Natural killer cell (primary cell): ENCODE measurements at regions of chr19 and their contacts with region 1.

Region 1: GRCh38 chr19:47514869-47515588 is at the start of gene NAPA:
- DNase-seq: peak; percentile 100
- ATAC-seq: peak; percentile 90 to 97 (median 91)
- H3K4me3 ChIP-seq: peak within 1 kb of the TSS; percentile 75
- H3K4me3 Mint-ChIP-seq: peak within 1 kb of the TSS; percentile 98
- H3K27ac ChIP-seq: peak within 1 kb of the TSS; percentile 90
- H3K27ac Mint-ChIP-seq: peak within 1 kb of the TSS; percentile 98 to 100
- H3K4me1 ChIP-seq: peaks cover 75% of the 10 kb centered on the region
- H3K4me1 Mint-ChIP-seq: peaks cover 56 to 90% of the 10 kb centered on the region in 2 donors
- H3K27me3 ChIP-seq: no peaks in the 10 kb centered on the region
- H3K27me3 Mint-ChIP-seq: no peaks in the 10 kb centered on the region
- CTCF ChIP-seq: no peak
- total RNA-seq, gene NAPA: 192 to 215 (median 192) TPM

Region 2: DNA sequence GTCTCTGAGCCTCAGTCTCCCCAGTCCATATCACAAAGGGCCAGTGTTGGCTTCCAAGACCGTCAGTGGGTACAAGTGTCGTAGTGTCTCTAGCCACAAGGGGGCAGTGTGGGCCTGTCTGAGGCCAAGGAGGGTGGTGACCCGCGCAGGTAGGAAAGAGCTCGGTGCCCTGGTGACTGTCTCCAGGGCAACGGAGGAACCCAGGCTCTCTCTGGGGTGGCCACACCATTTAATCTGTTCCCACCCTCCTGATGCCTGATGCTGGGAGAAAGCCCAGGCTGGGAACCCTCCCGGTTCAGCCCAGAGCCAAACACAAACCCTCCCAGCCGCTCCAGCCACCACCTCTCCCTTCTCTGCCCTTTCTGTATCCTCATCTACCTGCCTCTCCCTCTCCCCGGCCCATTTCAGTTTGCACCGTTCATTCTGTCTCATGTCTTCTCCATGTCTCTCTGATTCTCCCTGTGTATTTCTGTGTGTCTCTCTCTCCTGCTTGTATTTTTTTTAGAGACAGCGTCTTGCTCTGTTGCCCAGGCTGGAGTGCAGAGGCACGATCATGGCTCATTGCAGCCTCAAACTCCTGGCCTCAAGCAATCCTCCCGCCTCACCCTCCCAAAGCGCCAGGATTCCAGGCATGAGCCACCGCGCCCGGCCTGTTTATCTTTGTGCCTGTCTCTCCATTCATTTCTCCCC is 78.2 kb before region 1 on chr19:
- intact Hi-C with region 1: loop called (anchors 5 kb)
- DNase-seq: peak; percentile 81 to 92
- ATAC-seq: peak; percentile 92 to 99 (median 98)
- H3K4me3 ChIP-seq: no peak overlapping the region
- H3K4me3 Mint-ChIP-seq: no peak overlapping the region
- H3K27ac ChIP-seq: no peak overlapping the region
- H3K27ac Mint-ChIP-seq: peak overlapping the region in 1 of 2 donors; percentile 15
- H3K4me1 ChIP-seq: peaks cover 4% of the 10 kb centered on the region
- H3K4me1 Mint-ChIP-seq: peaks cover 12 to 13% of the 10 kb centered on the region in 2 donors
- H3K27me3 ChIP-seq: peaks cover 3% of the 10 kb centered on the region
- H3K27me3 Mint-ChIP-seq: peaks cover 51 to 65% of the 10 kb centered on the region in 2 donors
- CTCF ChIP-seq: peak; percentile 82

Region 3: DNA sequence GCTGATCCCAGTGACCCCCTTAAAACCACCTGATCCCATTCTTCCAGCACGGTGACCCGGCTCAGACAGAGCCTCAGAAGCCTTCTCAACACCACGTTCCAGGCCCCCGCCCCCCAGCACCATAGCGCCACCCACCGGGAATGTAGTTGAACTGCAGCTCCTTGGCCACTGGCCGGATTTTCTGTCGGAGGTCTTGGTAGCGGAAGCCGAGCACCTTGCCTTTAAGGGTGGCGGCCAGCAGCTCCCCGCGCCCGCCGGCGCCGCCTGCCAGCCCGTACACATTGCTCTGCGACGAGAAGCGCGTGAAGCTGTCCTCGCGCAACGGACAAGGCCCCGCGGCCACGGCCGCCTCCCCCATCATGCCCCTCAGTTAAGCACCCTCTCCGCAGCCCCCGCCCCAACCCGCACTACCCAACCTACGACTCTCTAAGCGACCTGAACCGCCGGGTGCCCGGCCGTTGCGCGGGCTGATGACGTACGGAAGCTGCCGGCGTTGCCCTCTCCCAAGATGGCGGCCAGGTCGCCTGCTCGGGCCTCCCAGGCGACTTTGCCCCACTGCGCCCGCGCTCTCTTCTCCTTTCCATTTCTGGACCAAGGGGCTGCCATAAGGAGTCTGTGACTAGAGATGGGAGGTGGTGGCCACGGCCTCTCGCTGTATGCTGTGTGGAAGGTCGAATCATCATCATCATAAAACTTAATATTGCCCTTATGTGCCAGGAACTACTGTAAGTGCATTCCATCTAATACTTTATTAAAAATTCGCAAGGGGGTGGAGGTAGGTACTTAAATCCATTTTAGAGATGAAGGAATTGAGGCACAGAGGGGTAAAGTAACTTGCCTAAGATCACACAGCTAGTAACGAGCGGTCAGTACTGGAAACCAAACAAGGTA is 31.0 kb before region 1 on chr19 and contains the start of gene KPTN:
- intact Hi-C with region 1: loop called (anchors 1 kb)
- DNase-seq: peak; percentile 88 to 93
- ATAC-seq: peak; percentile 81 to 92 (median 86)
- H3K4me3 ChIP-seq: peak within 1 kb of the TSS; percentile 65
- H3K4me3 Mint-ChIP-seq: peak within 1 kb of the TSS; percentile 95
- H3K27ac ChIP-seq: peak within 1 kb of the TSS; percentile 75
- H3K27ac Mint-ChIP-seq: peak within 1 kb of the TSS; percentile 93 to 97
- H3K4me1 ChIP-seq: peaks cover 35% of the 10 kb centered on the region
- H3K4me1 Mint-ChIP-seq: peaks cover 23 to 36% of the 10 kb centered on the region in 2 donors
- H3K27me3 ChIP-seq: no peaks in the 10 kb centered on the region
- H3K27me3 Mint-ChIP-seq: peaks cover 0 to 3% of the 10 kb centered on the region in 2 donors
- CTCF ChIP-seq: peak; percentile 82
- total RNA-seq, gene KPTN: 3.0 to 4.2 (median 3.6) TPM

Region 4: GRCh38 chr19:47540728-47541127 is 25.7 kb after region 1 on chr19:
- intact Hi-C with region 1: loop called (anchors 1 kb)
- DNase-seq: peak in 1 of 2 donors; percentile 53
- ATAC-seq: no peak
- H3K4me3 ChIP-seq: no peak overlapping the region
- H3K4me3 Mint-ChIP-seq: peak overlapping the region; percentile 86
- H3K27ac ChIP-seq: peak overlapping the region; percentile 68
- H3K27ac Mint-ChIP-seq: peak overlapping the region; percentile 91 to 93
- H3K4me1 ChIP-seq: peaks cover 63% of the 10 kb centered on the region
- H3K4me1 Mint-ChIP-seq: peaks cover 39 to 40% of the 10 kb centered on the region in 2 donors
- H3K27me3 ChIP-seq: peaks cover 10% of the 10 kb centered on the region
- H3K27me3 Mint-ChIP-seq: peaks cover 0 to 5% of the 10 kb centered on the region in 2 donors
- CTCF ChIP-seq: no peak

Region 5: DNA sequence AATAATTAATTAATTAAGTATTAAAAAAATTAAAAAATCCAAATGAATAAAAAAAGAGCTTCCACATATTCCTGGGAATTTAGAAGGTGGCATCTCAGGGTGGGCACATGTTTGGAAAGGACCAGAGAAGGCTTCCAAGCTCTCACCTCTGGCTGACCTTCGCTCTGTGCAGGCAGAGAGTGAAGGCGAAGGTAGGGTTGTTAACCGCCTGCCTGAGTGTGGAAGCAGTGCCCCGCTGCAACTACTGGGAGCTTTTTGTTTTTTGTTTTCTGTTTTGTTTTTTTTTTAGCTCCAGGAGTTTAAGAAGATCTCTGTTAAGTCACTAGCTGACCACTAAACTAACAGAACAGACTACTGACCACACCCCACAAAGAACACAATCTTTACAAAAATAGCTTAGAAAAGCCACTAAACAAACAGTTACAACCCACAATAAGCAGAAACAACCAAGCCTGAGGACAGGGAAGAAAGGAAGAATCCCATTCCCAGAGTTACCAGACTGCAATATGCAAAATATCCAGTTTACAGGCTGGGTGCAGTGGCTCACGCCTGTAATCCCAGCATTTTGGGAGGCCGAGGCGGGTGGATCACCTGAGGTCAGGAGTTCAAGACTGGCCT is 46.5 kb after region 1 on chr19:
- intact Hi-C with region 1: no loop called
- DNase-seq: no peak
- ATAC-seq: no peak
- H3K4me3 ChIP-seq: no peak overlapping the region
- H3K4me3 Mint-ChIP-seq: no peak overlapping the region
- H3K27ac ChIP-seq: no peak overlapping the region
- H3K27ac Mint-ChIP-seq: no peak overlapping the region
- H3K4me1 ChIP-seq: no peaks in the 10 kb centered on the region
- H3K4me1 Mint-ChIP-seq: peaks cover 0 to 6% of the 10 kb centered on the region in 2 donors
- H3K27me3 ChIP-seq: no peaks in the 10 kb centered on the region
- H3K27me3 Mint-ChIP-seq: peaks cover 0 to 5% of the 10 kb centered on the region in 2 donors
- CTCF ChIP-seq: no peak

Region 6: GRCh38 chr19:47573071-47574026 is 58.3 kb after region 1 on chr19 and contains the start of gene ZNF541:
- intact Hi-C with region 1: loop called (anchors 1 kb)
- DNase-seq: peak; percentile 84 to 95
- ATAC-seq: peak; percentile 94 to 98 (median 97)
- H3K4me3 ChIP-seq: peak within 1 kb of the TSS; percentile 67
- H3K4me3 Mint-ChIP-seq: peak within 1 kb of the TSS; percentile 83
- H3K27ac ChIP-seq: peak within 1 kb of the TSS; percentile 61
- H3K27ac Mint-ChIP-seq: peak within 1 kb of the TSS; percentile 17 to 54
- H3K4me1 ChIP-seq: peaks cover 23% of the 10 kb centered on the region
- H3K4me1 Mint-ChIP-seq: peaks cover 19 to 23% of the 10 kb centered on the region in 2 donors
- H3K27me3 ChIP-seq: no peaks in the 10 kb centered on the region
- H3K27me3 Mint-ChIP-seq: peaks cover 0 to 11% of the 10 kb centered on the region in 2 donors
- CTCF ChIP-seq: no peak
- total RNA-seq, gene ZNF541: 1.5 to 2.0 (median 1.5) TPM

Region 7: DNA sequence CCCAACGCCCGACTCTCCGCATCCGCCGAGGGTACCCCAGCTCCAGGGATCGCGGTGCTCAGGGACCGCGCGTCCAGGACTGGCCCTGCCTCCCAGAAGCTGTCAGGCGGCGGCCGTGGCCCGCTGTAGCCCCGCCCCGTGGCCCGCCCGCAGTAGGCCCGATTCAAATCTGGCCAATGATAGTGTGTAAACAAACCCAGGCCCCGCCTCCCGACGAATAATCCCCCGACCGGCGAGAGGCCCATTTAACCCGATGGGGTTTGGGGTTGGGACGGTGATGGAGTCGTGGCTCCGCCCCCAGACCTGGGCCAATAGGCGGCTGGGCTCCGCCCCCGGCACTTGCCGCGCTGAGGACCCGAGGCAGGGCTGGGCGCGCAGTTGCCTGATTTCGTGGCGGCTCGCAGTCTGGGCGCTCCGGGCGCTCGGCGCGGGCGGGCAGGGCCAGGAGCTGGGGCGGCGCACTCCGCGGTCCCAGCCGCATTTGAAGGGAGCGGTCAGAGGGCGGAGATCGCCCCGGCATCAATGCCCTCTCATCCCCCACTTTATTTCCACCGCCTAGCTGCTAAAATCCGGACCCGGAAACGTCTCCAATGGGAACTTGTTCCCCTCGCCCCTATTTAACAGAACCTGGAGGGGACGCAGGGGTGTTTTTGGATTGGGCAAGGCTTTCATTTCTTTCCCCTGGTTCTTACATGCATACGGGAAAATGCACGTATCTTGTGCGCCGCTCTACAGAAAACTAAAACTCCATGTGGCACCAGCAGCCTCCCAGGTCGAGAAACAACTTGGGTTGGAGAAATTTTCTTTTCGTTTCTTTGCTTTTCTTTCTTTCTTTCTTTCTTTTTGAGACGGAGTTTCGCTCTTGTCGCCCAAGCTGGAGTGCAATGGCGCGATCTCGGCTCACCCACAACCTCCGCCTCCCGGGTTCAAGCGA is 85.5 kb after region 1 on chr19:
- intact Hi-C with region 1: loop called (anchors 1 kb)
- DNase-seq: peak; percentile 96 to 100
- ATAC-seq: peak; percentile 95 to 98 (median 95)
- H3K4me3 ChIP-seq: peak overlapping the region; percentile 54
- H3K4me3 Mint-ChIP-seq: peak overlapping the region; percentile 93
- H3K27ac ChIP-seq: peak overlapping the region; percentile 75
- H3K27ac Mint-ChIP-seq: peak overlapping the region; percentile 92 to 94
- H3K4me1 ChIP-seq: peaks cover 41% of the 10 kb centered on the region
- H3K4me1 Mint-ChIP-seq: peaks cover 30 to 34% of the 10 kb centered on the region in 2 donors
- H3K27me3 ChIP-seq: no peaks in the 10 kb centered on the region
- H3K27me3 Mint-ChIP-seq: no peaks in the 10 kb centered on the region
- CTCF ChIP-seq: no peak

Region 8: GRCh38 chr19:47608074-47608918 is 93.3 kb after region 1 on chr19:
- intact Hi-C with region 1: loop called (anchors 2 kb)
- DNase-seq: peak; percentile 97 to 98
- ATAC-seq: peak; percentile 87 to 96 (median 87)
- H3K4me3 ChIP-seq: peak overlapping the region; percentile 92
- H3K4me3 Mint-ChIP-seq: peak overlapping the region; percentile 77
- H3K27ac ChIP-seq: peak overlapping the region; percentile 95
- H3K27ac Mint-ChIP-seq: peak overlapping the region; percentile 88
- H3K4me1 ChIP-seq: peaks cover 28% of the 10 kb centered on the region
- H3K4me1 Mint-ChIP-seq: peaks cover 14 to 30% of the 10 kb centered on the region in 2 donors
- H3K27me3 ChIP-seq: no peaks in the 10 kb centered on the region
- H3K27me3 Mint-ChIP-seq: no peaks in the 10 kb centered on the region
- CTCF ChIP-seq: peak; percentile 12